ENCODE measurements at regions of chr4 and their contacts with region 1.

Region 1: DNA sequence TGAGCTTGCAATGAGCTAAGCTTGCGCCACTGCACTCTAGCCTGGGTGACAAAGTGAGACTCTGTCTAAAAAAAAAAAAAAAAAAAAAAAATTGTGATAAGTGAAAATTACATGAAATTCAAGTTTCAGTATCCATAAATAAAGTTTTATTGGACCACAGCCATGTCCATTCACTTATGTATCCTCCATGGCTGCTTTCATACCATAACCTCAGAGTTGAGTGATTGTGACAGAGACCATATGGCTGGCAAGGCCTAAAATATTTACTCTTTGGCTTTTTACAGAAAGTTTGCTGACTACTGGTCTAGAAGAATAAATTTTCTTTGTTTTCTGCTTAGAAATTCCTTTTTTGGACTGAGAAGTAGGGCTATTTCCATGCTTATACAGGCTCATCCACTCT is 11.8 kb upstream of the SHISA3 start:
- DNase-seq: no peak
- H3K4me3 ChIP-seq: no peak overlapping the region
- H3K27ac ChIP-seq: no peak overlapping the region
- H3K4me1 ChIP-seq: no peaks in the 10 kb centered on the region
- H3K27me3 ChIP-seq: no peaks in the 10 kb centered on the region
- CTCF ChIP-seq: no peak
- POLR2A ChIP-seq: no peak

Region 2: DNA sequence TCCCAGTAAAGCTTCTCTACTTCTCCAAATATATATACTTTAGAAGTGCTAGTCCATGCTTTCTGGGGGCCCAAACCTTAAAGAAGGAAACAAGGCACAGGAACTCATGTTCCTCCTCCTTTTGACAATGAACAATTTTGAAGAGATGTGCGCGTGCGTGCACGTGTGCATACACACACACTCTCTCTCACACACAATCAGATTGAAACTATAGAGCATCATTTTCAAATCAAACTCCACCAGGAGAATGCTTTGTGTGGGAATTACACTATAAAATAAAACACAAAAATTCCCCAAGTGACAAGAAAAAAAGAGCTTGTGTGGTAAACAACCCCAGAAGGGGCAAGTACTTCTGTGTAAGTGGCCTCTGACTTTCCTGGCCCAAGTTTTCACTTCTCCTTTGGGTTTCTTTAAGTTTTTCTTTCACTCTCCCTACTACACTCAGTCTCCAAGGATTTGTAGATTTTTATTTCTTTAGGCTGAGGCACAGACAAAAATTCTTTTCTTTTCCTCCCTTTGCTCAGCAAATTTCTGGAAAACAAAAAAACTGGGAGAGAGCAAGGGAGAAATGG is 34.8 kb before region 1 on chr4:
- intact Hi-C with region 1: no loop called
- DNase-seq: no peak
- H3K4me3 ChIP-seq: no peak overlapping the region
- H3K27ac ChIP-seq: no peak overlapping the region
- H3K4me1 ChIP-seq: no peaks in the 10 kb centered on the region
- H3K27me3 ChIP-seq: no peaks in the 10 kb centered on the region
- CTCF ChIP-seq: no peak
- POLR2A ChIP-seq: no peak

Region 3: GRCh38 chr4:42446823-42447222 is 61.3 kb after region 1 on chr4:
- intact Hi-C with region 1: no loop called
- DNase-seq: no peak
- H3K4me3 ChIP-seq: no peak overlapping the region
- H3K27ac ChIP-seq: no peak overlapping the region
- H3K4me1 ChIP-seq: no peaks in the 10 kb centered on the region
- H3K27me3 ChIP-seq: no peaks in the 10 kb centered on the region
- CTCF ChIP-seq: no peak
- POLR2A ChIP-seq: no peak

Region 4: GRCh38 chr4:42501624-42502401 is 116.3 kb after region 1 on chr4:
- intact Hi-C with region 1: loop called (anchors 10 kb)
- DNase-seq: no peak
- H3K4me3 ChIP-seq: no peak overlapping the region
- H3K27ac ChIP-seq: no peak overlapping the region
- H3K4me1 ChIP-seq: no peaks in the 10 kb centered on the region
- H3K27me3 ChIP-seq: no peaks in the 10 kb centered on the region
- CTCF ChIP-seq: no peak
- POLR2A ChIP-seq: no peak